Cardiac septum (tissue), 1 donor: ENCODE measurements at regions of chr1 and their contacts with region 1.

Region 1: GRCh38 chr1:211830330-211831142 is at the start of gene LPGAT1:
- DNase-seq: peak; percentile 95
- total RNA-seq, gene LPGAT1: 43.4 TPM

Region 2: GRCh38 chr1:211675230-211676105 is 155.1 kb before region 1 on chr1 and contains the start of gene NEK2:
- intact Hi-C with region 1: loop called (anchors 5 kb)
- DNase-seq: peak; percentile 95
- total RNA-seq, gene NEK2: not detected

Region 3: GRCh38 chr1:211698161-211699026 is 132.1 kb before region 1 on chr1:
- intact Hi-C with region 1: loop called (anchors 1 kb)
- DNase-seq: peak; percentile 94